Sigmoid colon (tissue), 7 donors: ENCODE measurements at regions of chr1 and their contacts with region 1.

Region 1: GRCh38 chr1:75265792-75266191 is 131.6 kb downstream of the LHX8 start:
- DNase-seq: no peak
- H3K4me3 ChIP-seq: no peak overlapping the region
- H3K27ac ChIP-seq: no peak overlapping the region
- H3K4me1 ChIP-seq: no peaks in the 10 kb centered on the region
- H3K27me3 ChIP-seq: no peaks in the 10 kb centered on the region
- CTCF ChIP-seq: peak in 3 of 4 experiments; percentile 30 to 41 (median 40)
- EP300 ChIP-seq: no peak
- POLR2A ChIP-seq: no peak

Region 2: DNA sequence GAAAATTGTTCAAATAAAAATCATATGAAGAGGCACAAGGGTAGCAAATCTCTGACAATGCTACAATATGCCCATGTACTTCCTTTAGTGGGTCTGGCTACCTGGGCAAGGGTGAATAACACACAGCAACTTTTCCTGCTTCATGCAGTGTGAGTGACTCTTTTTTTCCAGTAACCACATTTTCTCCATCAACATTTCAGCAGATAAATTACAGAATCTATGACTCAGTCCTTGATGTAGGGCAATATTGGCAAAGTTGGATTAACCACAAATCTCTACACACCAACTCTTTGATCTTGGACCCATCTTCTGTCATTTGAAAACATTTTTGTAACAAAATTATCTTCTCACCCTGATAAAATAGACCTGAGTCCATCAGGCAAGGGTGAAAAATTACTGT is 623.9 kb before region 1 on chr1:
- intact Hi-C with region 1: loop called (anchors 10 kb)
- DNase-seq: no peak
- H3K4me3 ChIP-seq: no peak overlapping the region
- H3K27ac ChIP-seq: no peak overlapping the region
- H3K4me1 ChIP-seq: no peaks in the 10 kb centered on the region
- H3K27me3 ChIP-seq: no peaks in the 10 kb centered on the region
- CTCF ChIP-seq: no peak
- EP300 ChIP-seq: no peak
- POLR2A ChIP-seq: no peak

Region 3: DNA sequence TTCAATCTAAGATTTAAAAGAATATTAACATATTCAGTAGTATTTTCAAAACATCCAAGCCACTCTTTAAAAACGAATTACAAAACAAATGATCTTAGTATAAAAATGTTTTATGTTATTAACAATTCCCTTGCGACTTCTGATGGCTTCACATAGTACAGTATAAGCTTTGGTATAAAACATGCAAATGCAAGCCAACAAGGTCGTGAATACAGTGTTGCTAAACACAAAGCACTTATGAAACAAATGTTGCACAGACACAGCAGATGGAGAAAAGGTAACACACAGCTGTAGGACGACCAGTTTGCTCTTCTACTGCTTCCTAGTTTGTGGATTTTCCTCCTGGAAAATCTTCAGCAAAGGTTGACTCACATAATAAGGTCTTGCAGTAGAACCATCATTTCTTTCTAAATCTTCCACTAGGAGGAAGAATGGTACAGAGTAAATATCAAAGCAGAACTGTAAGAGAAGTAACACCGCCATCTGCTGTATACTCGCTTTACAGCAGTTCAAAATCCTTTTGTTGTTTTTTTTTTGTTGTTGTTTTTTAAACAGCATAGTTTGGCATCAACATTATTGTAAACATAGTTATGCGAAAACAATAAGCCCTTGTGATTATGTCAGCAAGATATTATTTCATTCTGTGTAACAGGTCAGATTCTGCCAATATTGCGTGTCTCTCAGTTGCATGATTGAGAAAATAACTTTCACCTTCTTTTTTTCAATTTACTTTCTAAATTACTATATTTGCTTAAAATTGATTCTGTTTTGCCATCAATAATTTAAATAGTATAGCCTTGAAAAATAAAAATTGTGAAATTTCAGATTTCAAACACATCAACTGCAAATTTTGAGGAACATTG is 62.1 kb before region 1 on chr1:
- intact Hi-C with region 1: no loop called
- DNase-seq: no peak
- H3K4me3 ChIP-seq: no peak overlapping the region
- H3K27ac ChIP-seq: no peak overlapping the region
- H3K4me1 ChIP-seq: no peaks in the 10 kb centered on the region
- H3K27me3 ChIP-seq: no peaks in the 10 kb centered on the region
- CTCF ChIP-seq: peak in 3 of 4 experiments; percentile 17 to 48 (median 47)
- EP300 ChIP-seq: no peak
- POLR2A ChIP-seq: no peak

Region 4: GRCh38 chr1:75220072-75220471 is 45.7 kb before region 1 on chr1:
- intact Hi-C with region 1: no loop called
- DNase-seq: no peak
- H3K4me3 ChIP-seq: no peak overlapping the region
- H3K27ac ChIP-seq: no peak overlapping the region
- H3K4me1 ChIP-seq: no peaks in the 10 kb centered on the region
- H3K27me3 ChIP-seq: no peaks in the 10 kb centered on the region
- CTCF ChIP-seq: no peak
- EP300 ChIP-seq: no peak
- POLR2A ChIP-seq: no peak

Region 5: GRCh38 chr1:76110666-76111065 is 844.9 kb after region 1 on chr1:
- intact Hi-C with region 1: no loop called
- DNase-seq: no peak
- H3K4me3 ChIP-seq: no peak overlapping the region
- H3K27ac ChIP-seq: no peak overlapping the region
- H3K4me1 ChIP-seq: no peaks in the 10 kb centered on the region
- H3K27me3 ChIP-seq: no peaks in the 10 kb centered on the region
- CTCF ChIP-seq: no peak
- EP300 ChIP-seq: no peak
- POLR2A ChIP-seq: no peak